IMR-90 (cell line): ENCODE measurements at regions of chr12 and their contacts with region 1.

Region 1: GRCh38 chr12:14257734-14258574 is 107.5 kb upstream of the ATF7IP start:
- DNase-seq: peak; percentile 100
- ATAC-seq: peak; percentile 78
- H3K4me3 ChIP-seq: no peak overlapping the region
- H3K27ac ChIP-seq: peak overlapping the region; percentile 89
- H3K4me1 ChIP-seq: peaks cover 18% of the 10 kb centered on the region
- H3K27me3 ChIP-seq: no peaks in the 10 kb centered on the region
- CTCF ChIP-seq: 0 out of 2 replicates have a peak, but pooled peaks have one; percentile 1
- POLR2A ChIP-seq: no peak
- RAD21 ChIP-seq: peak; percentile 25; the same call in 1 of the 2 replicates

Region 2: DNA sequence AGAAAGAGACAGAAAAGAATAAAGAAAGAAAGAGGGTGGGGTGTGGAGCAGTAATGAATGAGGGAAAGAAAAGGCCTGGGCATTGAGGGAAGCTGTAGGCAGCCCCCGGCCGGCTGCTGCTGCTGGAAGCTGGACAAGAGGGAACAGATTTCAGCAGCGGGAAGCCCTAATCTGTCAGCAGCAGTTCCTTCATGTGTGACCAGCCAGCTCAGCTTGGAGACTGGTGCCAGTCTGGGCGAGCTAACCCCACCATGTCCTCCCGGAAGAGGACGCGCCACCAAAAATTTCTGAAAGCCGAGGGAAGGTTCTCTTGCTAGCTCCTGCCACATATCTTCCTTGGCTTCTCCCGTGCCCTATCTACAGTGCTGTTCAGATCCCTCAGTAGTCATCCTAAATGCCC is 513.4 kb before region 1 on chr12:
- CTCF ChIA-PET with region 1: no interaction called
- POLR2A ChIA-PET with region 1: no interaction called
- dilution Hi-C with region 1: no loop called
- in situ Hi-C with region 1: no loop called
- intact Hi-C with region 1: no loop called
- DNase-seq: no peak
- ATAC-seq: no peak
- H3K4me3 ChIP-seq: no peak overlapping the region
- H3K27ac ChIP-seq: no peak overlapping the region
- H3K4me1 ChIP-seq: no peaks in the 10 kb centered on the region
- H3K27me3 ChIP-seq: no peaks in the 10 kb centered on the region
- CTCF ChIP-seq: no peak
- POLR2A ChIP-seq: no peak
- RAD21 ChIP-seq: no peak

Region 3: GRCh38 chr12:14322403-14322802 is 64.4 kb after region 1 on chr12:
- CTCF ChIA-PET with region 1: no interaction called
- POLR2A ChIA-PET with region 1: no interaction called
- dilution Hi-C with region 1: no loop called
- in situ Hi-C with region 1: no loop called
- intact Hi-C with region 1: loop called (anchors 1 kb)
- DNase-seq: peak; percentile 70
- ATAC-seq: peak; percentile 86
- H3K4me3 ChIP-seq: no peak overlapping the region
- H3K27ac ChIP-seq: peak overlapping the region; percentile 95; the same call in 1 of the 2 replicates
- H3K4me1 ChIP-seq: peaks cover 10% of the 10 kb centered on the region
- H3K27me3 ChIP-seq: no peaks in the 10 kb centered on the region
- CTCF ChIP-seq: no peak
- POLR2A ChIP-seq: no peak
- RAD21 ChIP-seq: no peak

Region 4: GRCh38 chr12:14384783-14385638 is 127.1 kb after region 1 on chr12:
- CTCF ChIA-PET with region 1: interaction called, 5 read pairs
- POLR2A ChIA-PET with region 1: interaction called, 5 read pairs
- dilution Hi-C with region 1: no loop called
- in situ Hi-C with region 1: no loop called
- intact Hi-C with region 1: loop called (anchors 1 kb)
- DNase-seq: peak; percentile 95
- ATAC-seq: peak; percentile 93
- H3K4me3 ChIP-seq: peak overlapping the region; percentile 36
- H3K27ac ChIP-seq: peak overlapping the region; percentile 39; the same call in 1 of the 2 replicates
- H3K4me1 ChIP-seq: no peaks in the 10 kb centered on the region
- H3K27me3 ChIP-seq: no peaks in the 10 kb centered on the region
- CTCF ChIP-seq: no peak
- POLR2A ChIP-seq: no peak
- RAD21 ChIP-seq: no peak

Region 5: DNA sequence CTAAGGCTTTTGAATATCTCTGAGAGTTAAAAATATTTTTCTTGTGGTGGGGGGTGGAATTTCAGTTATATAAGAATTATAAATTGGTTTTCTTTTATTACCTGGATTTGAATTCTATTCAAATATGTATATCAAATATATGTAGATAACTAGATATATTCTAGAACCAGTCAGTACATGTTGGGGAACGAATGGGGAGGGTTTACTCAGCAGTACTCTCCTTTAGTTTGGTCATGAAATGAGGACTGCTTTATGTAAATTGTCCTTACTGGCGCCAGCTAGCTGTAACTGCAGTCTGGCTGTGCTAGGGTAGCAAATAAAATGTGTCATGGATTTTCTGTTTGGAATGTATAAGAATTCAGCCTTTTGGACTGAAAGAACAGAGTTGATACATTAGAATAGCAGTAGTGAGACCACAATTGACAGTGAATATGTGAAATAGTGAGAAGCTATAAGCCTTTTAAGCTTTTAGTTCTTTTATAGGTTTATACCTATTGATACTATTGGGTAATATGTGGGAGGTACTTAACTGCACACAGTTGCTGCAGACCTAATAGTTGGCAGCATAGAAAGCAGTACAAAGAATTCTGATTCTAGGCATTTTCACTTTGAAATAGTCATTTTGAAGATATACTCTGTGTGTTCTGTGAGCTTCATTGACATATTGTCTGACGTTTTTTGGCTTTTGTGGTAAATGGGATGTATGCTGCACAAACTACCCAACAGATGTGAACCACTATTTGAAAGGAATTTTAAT is 136.5 kb after region 1 on chr12:
- CTCF ChIA-PET with region 1: interaction called, 8 read pairs
- POLR2A ChIA-PET with region 1: no interaction called
- dilution Hi-C with region 1: no loop called
- in situ Hi-C with region 1: no loop called
- intact Hi-C with region 1: loop called (anchors 2 kb)
- DNase-seq: peak; percentile 84
- ATAC-seq: peak; percentile 90
- H3K4me3 ChIP-seq: no peak overlapping the region
- H3K27ac ChIP-seq: no peak overlapping the region; the same call in 1 of the 2 replicates
- H3K4me1 ChIP-seq: no peaks in the 10 kb centered on the region; the same call in 1 of the 2 replicates
- H3K27me3 ChIP-seq: no peaks in the 10 kb centered on the region
- CTCF ChIP-seq: 0 out of 2 replicates have a peak, but pooled peaks have one; percentile 11
- POLR2A ChIP-seq: no peak
- RAD21 ChIP-seq: no peak

Region 6: GRCh38 chr12:14417715-14418114 is 159.8 kb after region 1 on chr12:
- CTCF ChIA-PET with region 1: interaction called, 3 read pairs
- POLR2A ChIA-PET with region 1: no interaction called
- dilution Hi-C with region 1: no loop called
- in situ Hi-C with region 1: no loop called
- intact Hi-C with region 1: loop called (anchors 2 kb)
- DNase-seq: peak; percentile 92
- ATAC-seq: peak; percentile 86
- H3K4me3 ChIP-seq: no peak overlapping the region
- H3K27ac ChIP-seq: no peak overlapping the region
- H3K4me1 ChIP-seq: peaks cover 2% of the 10 kb centered on the region; the same call in 1 of the 2 replicates
- H3K27me3 ChIP-seq: no peaks in the 10 kb centered on the region
- CTCF ChIP-seq: no peak
- POLR2A ChIP-seq: no peak
- RAD21 ChIP-seq: no peak

Region 7: GRCh38 chr12:14769969-14770495 is 512.1 kb after region 1 on chr12:
- CTCF ChIA-PET with region 1: no interaction called
- POLR2A ChIA-PET with region 1: no interaction called
- dilution Hi-C with region 1: no loop called
- in situ Hi-C with region 1: loop called (anchors 5 kb)
- intact Hi-C with region 1: no loop called
- DNase-seq: peak; percentile 68
- ATAC-seq: peak; percentile 42
- H3K4me3 ChIP-seq: peak overlapping the region; percentile 62
- H3K27ac ChIP-seq: peak overlapping the region; percentile 76
- H3K4me1 ChIP-seq: no peaks in the 10 kb centered on the region
- H3K27me3 ChIP-seq: no peaks in the 10 kb centered on the region
- CTCF ChIP-seq: peak; percentile 63
- POLR2A ChIP-seq: peak; percentile 63; the same call in 1 of the 2 replicates
- RAD21 ChIP-seq: peak; percentile 36; the same call in 1 of the 2 replicates

Region 8: DNA sequence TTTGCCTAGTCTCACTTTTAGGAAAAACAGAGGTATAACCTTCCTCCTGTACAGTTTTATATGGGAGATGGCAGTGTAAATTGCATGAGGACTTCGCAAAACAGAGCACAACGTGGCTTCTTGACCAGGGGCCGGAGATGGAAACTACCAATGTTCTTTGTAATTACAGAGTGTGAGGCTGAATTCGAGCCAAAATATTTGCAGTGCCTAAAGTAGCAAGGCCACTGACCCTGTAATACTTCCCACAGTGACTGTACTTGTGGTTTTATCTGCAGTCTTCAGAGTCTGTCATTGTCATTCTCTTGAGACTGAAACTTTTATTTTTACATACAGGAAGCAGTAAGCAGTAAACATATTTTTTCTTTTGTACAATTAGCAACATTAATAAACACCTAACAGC is 864.4 kb after region 1 on chr12:
- CTCF ChIA-PET with region 1: no interaction called
- POLR2A ChIA-PET with region 1: no interaction called
- dilution Hi-C with region 1: no loop called
- in situ Hi-C with region 1: no loop called
- intact Hi-C with region 1: no loop called
- DNase-seq: no peak
- ATAC-seq: no peak
- H3K4me3 ChIP-seq: no peak overlapping the region
- H3K27ac ChIP-seq: no peak overlapping the region
- H3K4me1 ChIP-seq: no peaks in the 10 kb centered on the region
- H3K27me3 ChIP-seq: no peaks in the 10 kb centered on the region
- CTCF ChIP-seq: no peak
- POLR2A ChIP-seq: no peak
- RAD21 ChIP-seq: no peak